MCF 10A (cell line): ENCODE measurements at regions of chr5 and their contacts with region 1.

Region 1: GRCh38 chr5:4862500-4862899 is 277.6 kb upstream of the ADAMTS16 start:
- DNase-seq: peak; percentile 48
- H3K4me3 Mint-ChIP-seq: no peak overlapping the region
- H3K27ac Mint-ChIP-seq: no peak overlapping the region
- H3K4me1 Mint-ChIP-seq: no peaks in the 10 kb centered on the region
- H3K27me3 Mint-ChIP-seq: no peaks in the 10 kb centered on the region
- CTCF ChIP-seq: peak; percentile 65

Region 2: GRCh38 chr5:4700069-4700468 is 162.4 kb before region 1 on chr5:
- CTCF ChIA-PET with region 1: interaction called, 3 read pairs
- POLR2A ChIA-PET with region 1: no interaction called
- intact Hi-C with region 1: loop called (anchors 1 kb)
- DNase-seq: peak; percentile 68
- H3K4me3 Mint-ChIP-seq: peak overlapping the region; percentile 21
- H3K27ac Mint-ChIP-seq: no peak overlapping the region
- H3K4me1 Mint-ChIP-seq: no peaks in the 10 kb centered on the region
- H3K27me3 Mint-ChIP-seq: no peaks in the 10 kb centered on the region
- CTCF ChIP-seq: peak; percentile 56

Region 3: GRCh38 chr5:4901305-4901811 is 38.9 kb after region 1 on chr5:
- CTCF ChIA-PET with region 1: no interaction called
- POLR2A ChIA-PET with region 1: no interaction called
- intact Hi-C with region 1: no loop called
- DNase-seq: no peak
- H3K4me3 Mint-ChIP-seq: no peak overlapping the region
- H3K27ac Mint-ChIP-seq: no peak overlapping the region
- H3K4me1 Mint-ChIP-seq: no peaks in the 10 kb centered on the region
- H3K27me3 Mint-ChIP-seq: peaks cover 37% of the 10 kb centered on the region
- CTCF ChIP-seq: no peak

Region 4: DNA sequence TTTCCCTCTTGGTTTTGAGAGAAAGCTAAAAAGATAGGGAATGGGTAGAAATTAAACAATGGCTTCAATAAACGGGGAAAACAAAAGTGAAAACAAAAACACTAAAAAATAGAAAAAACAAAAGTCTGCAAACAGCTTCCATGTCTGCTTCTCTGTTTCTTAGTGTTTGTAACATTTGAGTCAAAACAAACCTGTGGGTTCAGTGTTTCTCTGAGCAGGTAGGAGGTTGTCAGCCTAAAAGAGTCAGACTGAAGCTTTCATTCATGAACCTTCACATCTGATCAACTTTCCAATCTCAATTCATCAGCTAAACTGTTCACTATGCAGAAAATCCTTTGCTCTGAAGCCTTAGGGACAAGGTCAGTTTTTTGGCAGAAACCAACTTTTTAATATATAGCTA is 175.2 kb after region 1 on chr5:
- CTCF ChIA-PET with region 1: no interaction called
- POLR2A ChIA-PET with region 1: no interaction called
- intact Hi-C with region 1: no loop called
- DNase-seq: no peak
- H3K4me3 Mint-ChIP-seq: no peak overlapping the region
- H3K27ac Mint-ChIP-seq: no peak overlapping the region
- H3K4me1 Mint-ChIP-seq: no peaks in the 10 kb centered on the region
- H3K27me3 Mint-ChIP-seq: peaks cover 1% of the 10 kb centered on the region
- CTCF ChIP-seq: no peak